Activated naive CD4-positive, alpha-beta T cell treated with anti-CD3 and anti-CD28 coated beads for 36 hours (primary cell): ENCODE measurements at regions of chr6 and their contacts with region 1.

Region 1: GRCh38 chr6:170295510-170296422 is 4.9 kb upstream of the DLL1 start:
- DNase-seq: peak; percentile 73
- H3K4me3 Mint-ChIP-seq: peak overlapping the region; percentile 68
- H3K27ac Mint-ChIP-seq: no peak overlapping the region
- H3K4me1 Mint-ChIP-seq: peaks cover 33% of the 10 kb centered on the region
- H3K27me3 Mint-ChIP-seq: peaks cover 65% of the 10 kb centered on the region

Region 2: DNA sequence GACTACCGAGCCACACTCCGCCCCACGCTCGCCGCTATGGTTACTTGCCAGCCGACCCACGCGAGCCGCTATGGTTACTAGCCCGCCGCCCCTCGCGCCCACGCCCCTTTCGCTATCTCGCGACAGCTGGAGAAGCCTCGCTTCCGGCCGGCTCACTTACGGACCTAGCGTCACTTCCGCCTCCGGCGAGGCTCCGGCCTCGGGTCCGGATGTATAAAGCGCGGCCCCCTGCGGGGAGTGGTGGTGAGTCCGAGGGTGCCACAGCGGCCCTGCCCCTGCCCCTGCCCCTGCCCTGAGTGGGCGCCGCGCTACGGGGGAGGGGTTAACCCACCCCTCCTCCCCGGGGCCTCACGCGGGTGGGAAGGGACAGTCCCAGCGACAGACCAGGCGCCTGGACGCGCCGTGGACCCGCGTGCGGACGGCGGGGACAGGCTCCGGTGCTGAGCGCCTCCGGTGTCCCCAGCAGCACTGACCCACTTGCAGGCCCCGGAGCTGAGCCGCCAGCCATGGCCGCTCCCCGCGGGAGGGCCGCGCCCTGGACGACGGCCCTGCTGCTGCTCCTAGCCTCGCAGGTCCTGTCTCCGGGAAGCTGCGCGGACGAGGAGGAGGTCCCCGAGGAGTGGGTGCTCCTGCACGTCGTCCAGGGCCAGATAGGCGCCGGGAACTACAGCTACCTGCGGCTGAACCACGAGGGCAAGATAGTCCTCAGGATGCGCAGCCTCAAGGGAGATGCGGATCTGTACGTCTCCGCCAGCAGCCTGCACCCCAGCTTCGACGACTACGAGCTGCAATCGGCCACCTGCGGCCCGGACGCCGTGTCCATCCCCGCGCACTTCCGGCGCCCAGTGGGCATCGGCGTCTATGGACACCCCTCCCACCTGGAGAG is 593.6 kb before region 1 on chr6 and contains the starts of genes C6orf120 and WDR27:
- CTCF ChIA-PET with region 1: no interaction called
- intact Hi-C with region 1: loop called (anchors 5 kb)
- DNase-seq: peak; percentile 97
- H3K4me3 Mint-ChIP-seq: peak within 1 kb of the TSS; percentile 86
- H3K27ac Mint-ChIP-seq: peak within 1 kb of the TSS; percentile 91
- H3K4me1 Mint-ChIP-seq: peaks cover 41% of the 10 kb centered on the region
- H3K27me3 Mint-ChIP-seq: no peaks in the 10 kb centered on the region
- total RNA-seq, gene C6orf120: 10.7 to 11.7 TPM
- total RNA-seq, gene WDR27: 37.9 to 38.3 TPM

Region 3: GRCh38 chr6:169950558-169950957 is 345.2 kb before region 1 on chr6:
- CTCF ChIA-PET with region 1: no interaction called
- intact Hi-C with region 1: loop called (anchors 1 kb)
- DNase-seq: peak; percentile 66
- H3K4me3 Mint-ChIP-seq: no peak overlapping the region
- H3K27ac Mint-ChIP-seq: no peak overlapping the region
- H3K4me1 Mint-ChIP-seq: no peaks in the 10 kb centered on the region
- H3K27me3 Mint-ChIP-seq: no peaks in the 10 kb centered on the region

Region 4: GRCh38 chr6:170087941-170088581 is 207.7 kb before region 1 on chr6:
- CTCF ChIA-PET with region 1: no interaction called
- intact Hi-C with region 1: loop called (anchors 5 kb)
- DNase-seq: peak; percentile 72
- H3K4me3 Mint-ChIP-seq: peak overlapping the region; percentile 84
- H3K27ac Mint-ChIP-seq: peak overlapping the region; percentile 89
- H3K4me1 Mint-ChIP-seq: peaks cover 28% of the 10 kb centered on the region
- H3K27me3 Mint-ChIP-seq: no peaks in the 10 kb centered on the region

Region 5: GRCh38 chr6:170306324-170307079 is 10.7 kb after region 1 on chr6 and contains the start of gene FAM120B:
- CTCF ChIA-PET with region 1: interaction called, 15 read pairs
- intact Hi-C with region 1: loop called (anchors 1 kb)
- DNase-seq: peak; percentile 92
- H3K4me3 Mint-ChIP-seq: peak within 1 kb of the TSS; percentile 86
- H3K27ac Mint-ChIP-seq: peak within 1 kb of the TSS; percentile 81
- H3K4me1 Mint-ChIP-seq: peaks cover 36% of the 10 kb centered on the region
- H3K27me3 Mint-ChIP-seq: peaks cover 4% of the 10 kb centered on the region
- total RNA-seq, gene FAM120B: 15.5 to 16.1 TPM